Naive thymus-derived CD4-positive, alpha-beta T cell (primary cell): ENCODE measurements at regions of chr11 and their contacts with region 1.

Region 1: DNA sequence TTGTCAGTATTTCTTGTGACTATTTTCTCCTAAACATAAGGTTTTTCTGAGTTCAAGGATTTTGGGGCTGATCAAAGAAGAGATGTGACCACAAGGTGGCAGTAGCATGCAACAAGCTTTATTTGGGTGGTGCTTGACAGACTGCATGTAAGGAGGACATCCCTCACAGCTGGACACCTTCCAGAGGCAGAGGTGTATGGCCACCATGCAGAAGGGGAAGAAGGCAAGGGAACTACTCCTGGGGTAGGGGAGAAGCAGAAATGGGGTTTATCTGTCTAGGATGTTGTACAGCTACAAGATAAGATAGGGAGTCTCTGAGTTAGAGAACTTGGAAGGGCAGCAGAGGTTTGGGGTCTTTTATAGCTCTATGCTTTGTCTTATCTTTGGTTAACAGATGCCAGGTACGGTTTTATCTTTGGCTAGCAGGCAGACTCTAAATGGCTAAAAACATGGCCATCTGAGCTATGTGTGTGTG is 5.1 kb upstream of the BIRC2 start:
- DNase-seq: peak; percentile 20 to 76 (median 70)
- ATAC-seq: peak; percentile 61
- H3K4me3 ChIP-seq: no peak overlapping the region
- H3K4me3 Mint-ChIP-seq: peak overlapping the region in 1 of 10 donors; percentile 2
- H3K27ac ChIP-seq: no peak overlapping the region
- H3K27ac Mint-ChIP-seq: peak overlapping the region in 8 of 9 donors; percentile 17 to 84 (median 66)
- H3K4me1 ChIP-seq: peaks cover 5 to 11% of the 10 kb centered on the region in 2 donors
- H3K4me1 Mint-ChIP-seq: peaks cover 10 to 36% (median 22%) of the 10 kb centered on the region in 7 donors
- H3K27me3 ChIP-seq: no peaks in the 10 kb centered on the region
- H3K27me3 Mint-ChIP-seq: no peaks in the 10 kb centered on the region

Region 2: GRCh38 chr11:101346591-101346990 is 995.3 kb before region 1 on chr11:
- CTCF ChIA-PET with region 1: no interaction called
- POLR2A ChIA-PET with region 1: no interaction called
- intact Hi-C with region 1: no loop called
- DNase-seq: no peak
- ATAC-seq: no peak
- H3K4me3 ChIP-seq: no peak overlapping the region
- H3K4me3 Mint-ChIP-seq: no peak overlapping the region
- H3K27ac ChIP-seq: no peak overlapping the region
- H3K27ac Mint-ChIP-seq: no peak overlapping the region
- H3K4me1 ChIP-seq: no peaks in the 10 kb centered on the region
- H3K4me1 Mint-ChIP-seq: no peaks in the 10 kb centered on the region
- H3K27me3 ChIP-seq: no peaks in the 10 kb centered on the region
- H3K27me3 Mint-ChIP-seq: no peaks in the 10 kb centered on the region

Region 3: GRCh38 chr11:102168481-102168880 is 173.4 kb before region 1 on chr11:
- CTCF ChIA-PET with region 1: no interaction called
- POLR2A ChIA-PET with region 1: no interaction called
- intact Hi-C with region 1: no loop called
- DNase-seq: no peak
- ATAC-seq: no peak
- H3K4me3 ChIP-seq: no peak overlapping the region
- H3K4me3 Mint-ChIP-seq: no peak overlapping the region
- H3K27ac ChIP-seq: no peak overlapping the region
- H3K27ac Mint-ChIP-seq: no peak overlapping the region
- H3K4me1 ChIP-seq: no peaks in the 10 kb centered on the region
- H3K4me1 Mint-ChIP-seq: no peaks in the 10 kb centered on the region
- H3K27me3 ChIP-seq: no peaks in the 10 kb centered on the region
- H3K27me3 Mint-ChIP-seq: peaks cover 6 to 39% (median 23%) of the 10 kb centered on the region in 5 donors

Region 4: DNA sequence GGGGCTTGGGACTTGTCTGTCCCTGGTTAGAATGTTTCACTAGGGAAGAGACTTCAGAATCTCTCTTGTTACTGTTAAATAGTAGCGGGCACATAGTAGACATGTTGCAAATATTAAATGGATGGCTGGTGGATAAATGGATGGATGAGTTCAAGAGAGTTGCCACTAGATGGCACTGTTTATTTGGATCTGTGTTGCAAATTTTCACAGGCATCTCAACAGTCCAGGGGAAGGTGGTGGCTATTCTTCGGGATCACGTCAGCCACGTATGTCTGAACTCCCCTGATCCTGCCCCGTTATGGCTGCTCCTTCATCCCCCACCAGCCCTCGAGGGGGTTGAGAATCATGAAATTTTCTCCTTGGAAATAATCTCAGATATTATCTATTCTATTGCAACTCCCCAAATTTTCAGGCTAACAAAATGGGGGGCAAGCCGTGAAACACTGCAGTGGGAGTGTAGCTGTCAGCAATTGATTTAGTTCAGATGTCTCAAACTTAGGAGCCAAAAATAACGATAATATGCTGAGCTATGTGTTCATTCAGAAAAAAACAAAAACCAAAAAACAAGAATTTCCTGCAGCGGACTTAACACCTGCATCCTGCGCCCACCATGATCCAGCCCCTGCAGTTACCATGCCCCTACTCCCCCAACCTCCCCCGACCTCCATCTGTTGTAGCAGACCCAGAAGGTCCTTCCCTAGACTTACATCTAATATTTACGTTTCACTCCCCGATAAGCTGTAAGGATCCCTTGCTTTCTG is 53.7 kb before region 1 on chr11:
- CTCF ChIA-PET with region 1: interaction called, 52 read pairs
- POLR2A ChIA-PET with region 1: interaction called, 9 read pairs
- intact Hi-C with region 1: loop called (anchors 1 kb)
- DNase-seq: peak in 7 of 9 donors; percentile 51 to 73 (median 66)
- ATAC-seq: peak; percentile 86
- H3K4me3 ChIP-seq: no peak overlapping the region
- H3K4me3 Mint-ChIP-seq: peak overlapping the region in 9 of 10 donors; percentile 12 to 73 (median 60)
- H3K27ac ChIP-seq: no peak overlapping the region
- H3K27ac Mint-ChIP-seq: peak overlapping the region in 6 of 9 donors; percentile 15 to 56 (median 38)
- H3K4me1 ChIP-seq: peaks cover 3 to 5% of the 10 kb centered on the region in 2 donors
- H3K4me1 Mint-ChIP-seq: peaks cover 9 to 33% (median 27%) of the 10 kb centered on the region in 7 donors
- H3K27me3 ChIP-seq: no peaks in the 10 kb centered on the region
- H3K27me3 Mint-ChIP-seq: no peaks in the 10 kb centered on the region

Region 5: GRCh38 chr11:102306048-102306585 is 35.8 kb before region 1 on chr11:
- CTCF ChIA-PET with region 1: interaction called, 4 read pairs
- POLR2A ChIA-PET with region 1: interaction called, 11 read pairs
- intact Hi-C with region 1: loop called in 1 of 2 experiments (anchors 5 kb)
- DNase-seq: peak in 1 of 9 donors; percentile 30
- ATAC-seq: peak; percentile 23
- H3K4me3 ChIP-seq: peak overlapping the region; percentile 14
- H3K4me3 Mint-ChIP-seq: peak overlapping the region; percentile 46 to 84 (median 64)
- H3K27ac ChIP-seq: peak overlapping the region; percentile 68
- H3K27ac Mint-ChIP-seq: peak overlapping the region; percentile 87 to 96 (median 93)
- H3K4me1 ChIP-seq: peaks cover 49 to 76% of the 10 kb centered on the region in 2 donors
- H3K4me1 Mint-ChIP-seq: peaks cover 41 to 80% (median 67%) of the 10 kb centered on the region in 7 donors
- H3K27me3 ChIP-seq: no peaks in the 10 kb centered on the region
- H3K27me3 Mint-ChIP-seq: no peaks in the 10 kb centered on the region

Region 6: GRCh38 chr11:102361086-102362031 is 19.5 kb after region 1 on chr11:
- CTCF ChIA-PET with region 1: interaction called, 16 read pairs
- POLR2A ChIA-PET with region 1: interaction called, 55 read pairs
- intact Hi-C with region 1: loop called (anchors 1 kb)
- DNase-seq: peak in 8 of 9 donors; percentile 11 to 82 (median 76)
- ATAC-seq: peak; percentile 83
- H3K4me3 ChIP-seq: peak overlapping the region; percentile 42
- H3K4me3 Mint-ChIP-seq: peak overlapping the region; percentile 72 to 87 (median 77)
- H3K27ac ChIP-seq: peak overlapping the region; percentile 80
- H3K27ac Mint-ChIP-seq: peak overlapping the region; percentile 86 to 99 (median 97)
- H3K4me1 ChIP-seq: peaks cover 15 to 29% of the 10 kb centered on the region in 2 donors
- H3K4me1 Mint-ChIP-seq: peaks cover 27 to 71% (median 50%) of the 10 kb centered on the region in 7 donors
- H3K27me3 ChIP-seq: no peaks in the 10 kb centered on the region
- H3K27me3 Mint-ChIP-seq: no peaks in the 10 kb centered on the region

Region 7: DNA sequence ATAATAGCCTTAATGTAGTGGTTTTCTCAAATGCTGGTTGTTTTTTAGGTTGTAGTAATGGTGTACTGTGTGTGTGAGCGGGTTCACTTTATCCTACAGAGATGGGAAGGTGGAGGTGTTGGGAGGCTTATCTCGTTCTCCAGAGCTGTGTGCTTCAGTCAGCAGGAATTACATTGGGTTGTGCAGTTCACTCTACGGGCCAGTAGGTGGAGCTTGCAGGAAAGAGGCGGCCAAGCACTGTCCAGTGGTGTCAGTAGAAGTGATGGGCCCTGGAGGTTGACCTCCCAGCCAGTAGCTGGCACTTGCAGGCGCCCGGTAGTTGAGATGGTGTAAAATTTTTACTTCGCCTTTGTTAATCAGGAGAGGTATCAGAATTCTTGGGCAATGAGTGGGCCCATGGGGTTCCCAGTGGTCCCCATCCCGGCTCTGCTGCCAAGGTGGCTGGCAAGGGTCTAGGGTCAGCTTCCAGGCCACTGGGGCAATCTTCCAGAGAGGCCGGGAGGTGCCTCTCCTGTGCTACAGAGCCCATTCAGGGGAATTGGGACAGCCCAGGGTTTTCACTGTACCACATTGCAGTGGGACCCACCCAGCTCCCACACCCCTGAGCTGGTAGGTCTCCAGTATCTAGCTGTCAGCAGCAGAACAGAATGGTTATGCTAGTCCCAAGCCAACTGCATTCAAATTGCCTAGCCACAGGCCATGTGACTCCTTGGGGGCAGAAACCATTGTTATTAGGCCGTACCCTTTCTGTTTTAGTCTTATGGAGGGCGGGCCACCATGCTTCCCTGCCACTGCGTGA is 49.0 kb after region 1 on chr11:
- CTCF ChIA-PET with region 1: interaction called, 27 read pairs
- POLR2A ChIA-PET with region 1: interaction called, 6 read pairs
- intact Hi-C with region 1: loop called in 1 of 2 experiments (anchors 1 kb)
- DNase-seq: peak in 8 of 9 donors; percentile 20 to 55 (median 40)
- ATAC-seq: peak; percentile 92
- H3K4me3 ChIP-seq: no peak overlapping the region
- H3K4me3 Mint-ChIP-seq: peak overlapping the region in 1 of 10 donors; percentile 12
- H3K27ac ChIP-seq: no peak overlapping the region
- H3K27ac Mint-ChIP-seq: peak overlapping the region in 8 of 9 donors; percentile 59 to 91 (median 77)
- H3K4me1 ChIP-seq: peaks cover 0 to 16% of the 10 kb centered on the region in 2 donors
- H3K4me1 Mint-ChIP-seq: peaks cover 10 to 54% (median 48%) of the 10 kb centered on the region in 7 donors
- H3K27me3 ChIP-seq: no peaks in the 10 kb centered on the region
- H3K27me3 Mint-ChIP-seq: no peaks in the 10 kb centered on the region

Region 8: GRCh38 chr11:102614485-102614884 is 272.6 kb after region 1 on chr11:
- CTCF ChIA-PET with region 1: interaction called, 21 read pairs
- POLR2A ChIA-PET with region 1: no interaction called
- intact Hi-C with region 1: loop called (anchors 1 kb)
- DNase-seq: peak in 1 of 9 donors; percentile 2
- ATAC-seq: no peak
- H3K4me3 ChIP-seq: no peak overlapping the region
- H3K4me3 Mint-ChIP-seq: no peak overlapping the region
- H3K27ac ChIP-seq: no peak overlapping the region
- H3K27ac Mint-ChIP-seq: no peak overlapping the region
- H3K4me1 ChIP-seq: no peaks in the 10 kb centered on the region
- H3K4me1 Mint-ChIP-seq: peaks cover 0 to 12% (median 0%) of the 10 kb centered on the region in 7 donors
- H3K27me3 ChIP-seq: no peaks in the 10 kb centered on the region
- H3K27me3 Mint-ChIP-seq: peaks cover 0 to 6% (median 0%) of the 10 kb centered on the region in 5 donors

Region 9: GRCh38 chr11:104275992-104276391 is 1934.1 kb after region 1 on chr11:
- CTCF ChIA-PET with region 1: no interaction called
- POLR2A ChIA-PET with region 1: no interaction called
- intact Hi-C with region 1: no loop called
- DNase-seq: no peak
- ATAC-seq: no peak
- H3K4me3 ChIP-seq: no peak overlapping the region
- H3K4me3 Mint-ChIP-seq: no peak overlapping the region
- H3K27ac ChIP-seq: no peak overlapping the region
- H3K27ac Mint-ChIP-seq: no peak overlapping the region
- H3K4me1 ChIP-seq: no peaks in the 10 kb centered on the region
- H3K4me1 Mint-ChIP-seq: no peaks in the 10 kb centered on the region
- H3K27me3 ChIP-seq: no peaks in the 10 kb centered on the region
- H3K27me3 Mint-ChIP-seq: no peaks in the 10 kb centered on the region